ENCODE measurements at regions of chr15 and their contacts with region 1.

Region 1: DNA sequence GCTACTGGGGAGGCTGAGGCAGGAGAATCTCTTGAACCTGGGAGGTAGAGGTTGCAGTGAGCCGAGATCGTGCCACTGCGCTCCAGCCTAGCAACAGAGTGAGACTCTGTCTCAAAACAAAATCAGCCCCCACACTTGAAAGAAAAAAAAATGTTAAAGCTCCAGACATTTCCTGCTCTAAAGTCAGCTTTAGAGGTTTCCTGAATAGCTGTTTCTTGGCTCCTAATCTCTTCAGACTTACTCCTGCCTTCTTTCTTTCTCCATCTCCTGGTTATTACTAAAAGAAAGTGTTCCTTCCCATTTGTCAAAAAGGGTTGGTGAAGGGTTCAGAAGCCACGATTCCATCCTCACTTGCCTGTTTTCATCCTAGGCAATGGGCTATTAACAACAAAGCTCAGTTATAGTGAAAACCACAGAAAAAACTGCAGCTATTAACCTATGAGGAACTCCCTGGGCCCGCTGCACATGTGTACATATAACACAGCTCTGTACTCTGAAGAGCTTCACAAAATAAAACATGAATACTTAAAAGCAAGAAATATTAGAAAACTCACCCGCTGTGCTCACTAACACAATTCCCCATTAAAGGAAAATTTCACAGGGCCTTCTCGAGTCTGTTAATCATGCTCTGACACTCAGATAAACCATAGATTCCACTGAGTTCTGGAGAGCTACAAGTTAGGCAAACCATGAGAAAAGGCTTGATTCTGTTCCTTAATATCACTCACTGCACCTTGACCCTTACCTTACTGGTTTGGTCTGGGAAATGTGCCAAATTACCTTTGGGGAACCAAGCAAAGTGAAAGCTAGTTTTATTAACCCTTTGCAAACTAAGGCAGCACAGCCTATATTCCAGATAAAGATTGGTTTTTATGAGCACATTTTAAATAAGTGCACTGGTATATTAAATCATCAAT is 89.9 kb upstream of the TSPAN3 start:
- DNase-seq: no peak
- ATAC-seq: peak; percentile 52
- H3K4me3 Mint-ChIP-seq: peak overlapping the region; percentile 30
- H3K27ac Mint-ChIP-seq: peak overlapping the region; percentile 74
- H3K4me1 Mint-ChIP-seq: peaks cover 51% of the 10 kb centered on the region
- H3K27me3 Mint-ChIP-seq: no peaks in the 10 kb centered on the region
- CTCF ChIP-seq: no peak

Region 2: GRCh38 chr15:77138167-77138522 is 22.7 kb before region 1 on chr15:
- CTCF ChIA-PET with region 1: no interaction called
- POLR2A ChIA-PET with region 1: no interaction called
- intact Hi-C with region 1: no loop called
- DNase-seq: no peak
- ATAC-seq: no peak
- H3K4me3 Mint-ChIP-seq: no peak overlapping the region
- H3K27ac Mint-ChIP-seq: no peak overlapping the region
- H3K4me1 Mint-ChIP-seq: no peaks in the 10 kb centered on the region
- H3K27me3 Mint-ChIP-seq: no peaks in the 10 kb centered on the region
- CTCF ChIP-seq: no peak

Region 3: GRCh38 chr15:77181305-77182074 is 20.7 kb after region 1 on chr15:
- CTCF ChIA-PET with region 1: no interaction called
- POLR2A ChIA-PET with region 1: interaction called, 5 read pairs
- intact Hi-C with region 1: loop called (anchors 2 kb)
- DNase-seq: peak; percentile 37
- ATAC-seq: peak; percentile 75
- H3K4me3 Mint-ChIP-seq: peak overlapping the region; percentile 78
- H3K27ac Mint-ChIP-seq: peak overlapping the region; percentile 94
- H3K4me1 Mint-ChIP-seq: peaks cover 82% of the 10 kb centered on the region
- H3K27me3 Mint-ChIP-seq: no peaks in the 10 kb centered on the region
- CTCF ChIP-seq: no peak